Activated CD4-positive, alpha-beta T cell treated with anti-CD3 and anti-CD28 coated beads for 36 hours (primary cell): ENCODE measurements at regions of chr6 and their contacts with region 1.

Region 1: DNA sequence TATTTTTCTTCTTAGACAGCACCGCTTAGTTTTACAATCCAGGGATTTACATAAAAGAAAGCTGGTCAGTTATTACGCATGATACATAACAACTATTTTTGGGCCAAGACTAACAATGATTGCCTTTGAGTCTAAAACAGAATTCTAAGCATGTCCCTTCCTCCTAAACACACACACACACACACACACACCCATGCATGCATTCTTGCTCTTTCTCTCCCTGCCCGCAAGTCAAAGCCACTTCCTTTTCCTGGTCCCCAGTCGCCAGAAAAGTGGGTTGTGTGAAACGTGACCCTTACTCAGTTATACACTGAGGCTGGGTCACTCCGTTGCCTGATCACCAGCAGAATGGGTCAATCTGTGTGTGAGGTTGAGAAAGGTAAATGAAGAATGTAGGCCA is 31.4 kb downstream of the FYN start:
- DNase-seq: peak; percentile 67
- ATAC-seq: no peak
- H3K4me3 Mint-ChIP-seq: no peak overlapping the region
- H3K27ac Mint-ChIP-seq: no peak overlapping the region
- H3K4me1 Mint-ChIP-seq: peaks cover 63% of the 10 kb centered on the region
- H3K27me3 Mint-ChIP-seq: no peaks in the 10 kb centered on the region

Region 2: GRCh38 chr6:111185954-111186353 is 655.9 kb before region 1 on chr6:
- CTCF ChIA-PET with region 1: no interaction called
- POLR2A ChIA-PET with region 1: no interaction called
- intact Hi-C with region 1: no loop called
- DNase-seq: no peak
- ATAC-seq: no peak
- H3K4me3 Mint-ChIP-seq: no peak overlapping the region
- H3K27ac Mint-ChIP-seq: no peak overlapping the region
- H3K4me1 Mint-ChIP-seq: peaks cover 10% of the 10 kb centered on the region
- H3K27me3 Mint-ChIP-seq: no peaks in the 10 kb centered on the region

Region 3: DNA sequence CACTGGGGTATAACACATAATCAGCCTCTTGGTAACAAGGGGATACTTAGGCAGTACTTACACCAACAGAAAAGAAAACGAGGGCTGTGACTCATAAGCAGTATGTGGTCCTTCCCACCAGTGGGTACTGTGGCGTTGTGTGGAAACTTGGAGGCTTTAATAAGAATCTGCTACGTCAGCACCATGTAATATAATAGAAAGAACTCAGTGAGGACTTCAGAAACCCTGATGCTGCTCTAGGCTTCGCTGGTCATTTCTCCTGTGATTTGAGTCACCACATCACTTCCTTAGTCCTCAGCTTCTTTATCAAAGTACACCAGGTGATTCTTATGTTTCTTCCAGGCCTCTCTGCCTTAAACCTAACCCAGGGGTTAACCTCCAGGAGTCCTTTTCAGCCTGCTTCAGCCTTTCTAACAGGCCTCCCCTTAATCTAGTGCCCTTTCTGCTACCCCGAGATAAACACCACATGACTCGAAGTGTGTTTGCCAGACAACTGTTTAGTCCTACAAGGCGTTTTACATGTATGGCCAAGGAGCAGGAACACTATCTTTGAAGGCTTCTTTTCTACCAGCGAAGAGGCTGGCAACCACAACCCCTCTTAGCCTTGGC is 37.1 kb before region 1 on chr6:
- CTCF ChIA-PET with region 1: interaction called, 7 read pairs
- POLR2A ChIA-PET with region 1: interaction called, 17 read pairs
- intact Hi-C with region 1: loop called (anchors 1 kb)
- DNase-seq: peak; percentile 83
- ATAC-seq: peak; percentile 62
- H3K4me3 Mint-ChIP-seq: peak overlapping the region; percentile 60
- H3K27ac Mint-ChIP-seq: peak overlapping the region; percentile 98
- H3K4me1 Mint-ChIP-seq: peaks cover 98% of the 10 kb centered on the region
- H3K27me3 Mint-ChIP-seq: no peaks in the 10 kb centered on the region

Region 4: DNA sequence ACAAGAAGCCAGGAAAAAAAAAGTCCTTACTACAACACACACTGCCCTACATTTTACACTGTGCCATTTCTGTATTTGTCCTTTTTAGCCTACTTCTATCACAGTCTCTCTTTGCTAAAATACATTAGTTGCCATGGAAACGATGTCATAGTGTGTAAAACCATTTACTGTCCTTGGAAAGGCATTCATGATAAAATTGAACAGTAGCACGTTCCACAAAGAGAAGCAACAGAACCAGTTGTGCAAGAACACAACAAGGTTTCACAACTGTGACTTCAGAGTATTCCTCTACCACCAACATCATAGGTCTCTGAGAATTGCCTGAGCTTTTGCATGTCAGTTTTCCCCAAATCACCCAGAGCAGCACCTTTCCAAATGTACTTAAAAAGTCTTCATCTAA is 10.9 kb after region 1 on chr6:
- CTCF ChIA-PET with region 1: interaction called, 8 read pairs
- POLR2A ChIA-PET with region 1: interaction called, 10 read pairs
- intact Hi-C with region 1: loop called in 1 of 2 experiments (anchors 2 kb)
- DNase-seq: no peak
- ATAC-seq: no peak
- H3K4me3 Mint-ChIP-seq: no peak overlapping the region
- H3K27ac Mint-ChIP-seq: peak overlapping the region; percentile 77
- H3K4me1 Mint-ChIP-seq: peaks cover 97% of the 10 kb centered on the region
- H3K27me3 Mint-ChIP-seq: no peaks in the 10 kb centered on the region

Region 5: GRCh38 chr6:111873178-111874024 is 31.6 kb after region 1 on chr6 and contains the start of gene FYN:
- CTCF ChIA-PET with region 1: interaction called, 9 read pairs
- POLR2A ChIA-PET with region 1: interaction called, 6 read pairs
- intact Hi-C with region 1: loop called (anchors 1 kb)
- DNase-seq: peak; percentile 100
- ATAC-seq: peak; percentile 87
- H3K4me3 Mint-ChIP-seq: peak within 1 kb of the TSS; percentile 98
- H3K27ac Mint-ChIP-seq: peak within 1 kb of the TSS; percentile 91
- H3K4me1 Mint-ChIP-seq: peaks cover 35% of the 10 kb centered on the region
- H3K27me3 Mint-ChIP-seq: no peaks in the 10 kb centered on the region
- total RNA-seq, gene FYN: 345 to 504 TPM

Region 6: GRCh38 chr6:111997078-111997852 is 155.4 kb after region 1 on chr6:
- CTCF ChIA-PET with region 1: interaction called, 5 read pairs
- POLR2A ChIA-PET with region 1: no interaction called
- intact Hi-C with region 1: loop called (anchors 2 to 10 kb)
- DNase-seq: peak; percentile 89
- ATAC-seq: peak; percentile 71
- H3K4me3 Mint-ChIP-seq: peak overlapping the region; percentile 43
- H3K27ac Mint-ChIP-seq: peak overlapping the region; percentile 72
- H3K4me1 Mint-ChIP-seq: peaks cover 51% of the 10 kb centered on the region
- H3K27me3 Mint-ChIP-seq: no peaks in the 10 kb centered on the region

Region 7: GRCh38 chr6:112037783-112038216 is 196.0 kb after region 1 on chr6:
- CTCF ChIA-PET with region 1: interaction called, 14 read pairs
- POLR2A ChIA-PET with region 1: interaction called, 3 read pairs
- intact Hi-C with region 1: loop called in 1 of 2 experiments (anchors 1 kb)
- DNase-seq: peak; percentile 49
- ATAC-seq: peak; percentile 6
- H3K4me3 Mint-ChIP-seq: no peak overlapping the region
- H3K27ac Mint-ChIP-seq: no peak overlapping the region
- H3K4me1 Mint-ChIP-seq: peaks cover 83% of the 10 kb centered on the region
- H3K27me3 Mint-ChIP-seq: no peaks in the 10 kb centered on the region